Activated CD4-positive, alpha-beta T cell treated with anti-CD3 and anti-CD28 coated beads, Interleukin-2, amount 10 ng/mL, durations not matched to agents 24 days and 14 days (primary cell): ENCODE measurements at regions of chr20 and their contacts with region 1.

Region 1: GRCh38 chr20:23143098-23143497 is 57.0 kb upstream of the CD93 start:
- DNase-seq: peak; percentile 80
- H3K4me3 Mint-ChIP-seq: peak overlapping the region; percentile 45
- H3K27ac Mint-ChIP-seq: peak overlapping the region; percentile 59
- H3K4me1 Mint-ChIP-seq: peaks cover 61% of the 10 kb centered on the region
- H3K27me3 Mint-ChIP-seq: peaks cover 4% of the 10 kb centered on the region

Region 2: GRCh38 chr20:23106261-23106851 is 36.7 kb before region 1 on chr20:
- intact Hi-C with region 1: no loop called
- DNase-seq: no peak
- H3K4me3 Mint-ChIP-seq: no peak overlapping the region
- H3K27ac Mint-ChIP-seq: no peak overlapping the region
- H3K4me1 Mint-ChIP-seq: no peaks in the 10 kb centered on the region
- H3K27me3 Mint-ChIP-seq: peaks cover 4% of the 10 kb centered on the region

Region 3: DNA sequence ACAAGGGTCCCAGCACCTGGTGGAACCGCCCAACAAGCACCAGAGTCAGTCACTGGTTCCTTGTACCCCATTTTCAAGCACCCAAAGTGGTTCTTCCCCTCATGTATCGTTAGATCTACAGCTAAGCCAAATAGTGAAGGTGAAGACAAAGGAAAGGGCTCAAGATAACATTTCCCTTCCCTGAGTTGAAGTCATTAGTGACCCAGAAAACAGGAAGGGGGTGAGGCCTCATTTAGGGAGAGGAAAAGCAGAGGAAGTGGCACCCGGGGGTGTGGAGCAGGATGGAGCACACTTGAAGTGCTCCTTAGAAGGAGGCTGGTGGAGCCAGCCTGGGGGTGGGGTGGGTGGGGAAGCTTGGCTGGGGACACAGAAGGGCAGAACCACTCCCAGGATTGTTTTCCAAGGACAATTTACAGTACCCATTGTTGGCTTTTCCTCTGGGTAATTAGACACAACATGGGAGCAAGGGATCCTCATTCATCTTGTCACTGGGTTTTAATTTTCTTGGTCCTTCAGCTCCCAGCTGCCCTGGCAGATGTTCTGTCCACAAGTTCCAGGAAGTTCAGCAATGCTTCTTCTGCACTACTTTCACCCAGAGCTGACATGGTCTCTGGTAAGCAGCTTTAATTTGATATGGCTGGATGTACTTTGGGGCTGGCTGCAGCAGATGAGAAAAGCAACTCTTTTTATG is 16.3 kb after region 1 on chr20:
- intact Hi-C with region 1: loop called (anchors 2 kb)
- DNase-seq: no peak
- H3K4me3 Mint-ChIP-seq: peak overlapping the region; percentile 41
- H3K27ac Mint-ChIP-seq: peak overlapping the region; percentile 48
- H3K4me1 Mint-ChIP-seq: peaks cover 25% of the 10 kb centered on the region
- H3K27me3 Mint-ChIP-seq: peaks cover 2% of the 10 kb centered on the region